Activated CD8-positive, alpha-beta T cell treated with anti-CD3 and anti-CD28 coated beads, Interleukin-2, amount 10 ng/mL, durations not matched to agents 7 days and 5 days (primary cell): ENCODE measurements at regions of chr15 and their contacts with region 1.

Region 1: DNA sequence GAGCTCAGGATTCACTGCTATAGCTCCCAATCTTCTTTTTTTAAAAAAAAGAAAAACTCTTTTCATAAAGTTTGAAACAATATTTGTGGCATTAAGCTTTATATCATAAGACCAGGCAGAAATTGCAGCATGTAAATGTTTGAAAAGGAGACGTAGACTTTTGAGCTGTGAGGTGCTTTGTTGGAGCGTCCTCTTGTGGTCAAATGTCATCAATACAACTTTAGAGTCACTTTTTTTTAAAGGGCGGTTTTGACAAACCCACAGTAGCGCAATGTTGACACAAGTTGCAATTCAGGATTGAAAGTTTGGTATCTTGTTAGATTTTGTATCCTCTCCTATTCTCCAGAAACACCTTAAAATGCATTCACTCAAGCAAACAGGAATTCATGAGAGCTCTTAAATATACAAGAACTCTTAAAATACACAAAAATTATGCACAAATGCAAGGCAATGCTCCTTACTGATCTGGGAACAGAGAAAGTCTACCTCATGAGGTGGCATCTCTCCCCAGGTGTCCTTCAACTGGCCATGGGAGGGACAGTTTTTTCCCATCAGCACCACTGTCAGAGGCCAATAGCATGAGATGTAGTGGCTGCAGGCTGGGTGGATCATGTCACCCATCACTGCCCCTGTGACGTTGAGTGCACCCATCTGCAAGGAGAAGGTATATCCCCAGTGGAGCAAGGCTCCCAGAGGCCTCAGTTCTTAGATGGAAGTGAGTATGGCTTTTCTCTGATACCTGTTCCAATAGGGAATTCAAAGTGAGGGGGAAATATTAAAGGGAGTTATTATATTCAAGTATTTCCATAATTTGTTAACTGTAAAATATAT is 70.7 kb downstream of the ANXA2 start:
- DNase-seq: peak; percentile 60
- ATAC-seq: no peak
- H3K4me3 Mint-ChIP-seq: no peak overlapping the region
- H3K27ac Mint-ChIP-seq: no peak overlapping the region
- H3K4me1 Mint-ChIP-seq: no peaks in the 10 kb centered on the region
- H3K27me3 Mint-ChIP-seq: peaks cover 40% of the 10 kb centered on the region

Region 2: GRCh38 chr15:59688841-59689625 is 638.0 kb before region 1 on chr15 and contains the start of gene BNIP2:
- CTCF ChIA-PET with region 1: interaction called, 17 read pairs
- POLR2A ChIA-PET with region 1: no interaction called
- DNase-seq: peak; percentile 100
- ATAC-seq: peak; percentile 94
- H3K4me3 Mint-ChIP-seq: peak within 1 kb of the TSS; percentile 88
- H3K27ac Mint-ChIP-seq: peak within 1 kb of the TSS; percentile 96
- H3K4me1 Mint-ChIP-seq: peaks cover 40% of the 10 kb centered on the region
- H3K27me3 Mint-ChIP-seq: no peaks in the 10 kb centered on the region
- total RNA-seq, gene BNIP2: 69.0 to 74.8 TPM

Region 3: GRCh38 chr15:59741274-59741906 is 585.6 kb before region 1 on chr15:
- CTCF ChIA-PET with region 1: interaction called, 15 read pairs
- POLR2A ChIA-PET with region 1: interaction called, 3 read pairs
- DNase-seq: no peak
- ATAC-seq: no peak
- H3K4me3 Mint-ChIP-seq: no peak overlapping the region
- H3K27ac Mint-ChIP-seq: no peak overlapping the region
- H3K4me1 Mint-ChIP-seq: no peaks in the 10 kb centered on the region
- H3K27me3 Mint-ChIP-seq: peaks cover 8% of the 10 kb centered on the region

Region 4: DNA sequence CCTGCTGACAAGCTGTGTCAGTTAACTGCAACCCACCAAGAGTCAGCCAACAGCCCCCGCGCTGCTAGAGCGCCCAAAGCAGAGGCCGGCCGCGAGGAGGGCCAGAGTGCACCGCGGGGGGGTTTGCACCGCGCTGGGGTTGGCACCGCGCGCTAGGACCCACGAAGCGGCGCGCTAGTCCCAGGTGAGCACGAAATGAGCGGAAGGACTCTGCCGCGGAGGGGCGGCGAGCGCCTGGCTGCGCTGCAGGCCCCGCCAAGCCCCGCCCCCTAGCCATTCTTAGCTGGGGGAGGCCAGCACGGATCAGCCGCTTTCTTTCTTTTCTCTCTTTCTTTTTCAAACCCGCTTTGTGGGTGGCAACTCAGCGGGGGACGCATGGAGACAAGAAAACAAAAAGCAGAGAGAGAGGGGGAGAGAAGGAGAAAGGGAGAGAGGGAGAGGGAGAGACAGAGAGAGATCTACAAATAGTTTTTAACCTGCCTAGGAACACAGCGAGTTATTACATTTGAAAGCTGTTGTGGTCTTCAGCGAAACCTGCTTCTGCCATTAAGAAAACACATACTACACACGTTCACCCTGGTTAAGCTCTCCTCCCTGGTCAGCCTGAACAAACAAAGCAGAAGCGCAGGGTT is 329.9 kb before region 1 on chr15:
- CTCF ChIA-PET with region 1: interaction called, 14 read pairs
- POLR2A ChIA-PET with region 1: no interaction called
- DNase-seq: peak; percentile 85
- ATAC-seq: peak; percentile 93
- H3K4me3 Mint-ChIP-seq: peak overlapping the region; percentile 81
- H3K27ac Mint-ChIP-seq: peak overlapping the region; percentile 82
- H3K4me1 Mint-ChIP-seq: peaks cover 79% of the 10 kb centered on the region
- H3K27me3 Mint-ChIP-seq: peaks cover 93% of the 10 kb centered on the region

Region 5: GRCh38 chr15:60243769-60244168 is 83.3 kb before region 1 on chr15:
- CTCF ChIA-PET with region 1: no interaction called
- POLR2A ChIA-PET with region 1: no interaction called
- DNase-seq: no peak
- ATAC-seq: no peak
- H3K4me3 Mint-ChIP-seq: no peak overlapping the region
- H3K27ac Mint-ChIP-seq: no peak overlapping the region
- H3K4me1 Mint-ChIP-seq: no peaks in the 10 kb centered on the region
- H3K27me3 Mint-ChIP-seq: peaks cover 51% of the 10 kb centered on the region

Region 6: DNA sequence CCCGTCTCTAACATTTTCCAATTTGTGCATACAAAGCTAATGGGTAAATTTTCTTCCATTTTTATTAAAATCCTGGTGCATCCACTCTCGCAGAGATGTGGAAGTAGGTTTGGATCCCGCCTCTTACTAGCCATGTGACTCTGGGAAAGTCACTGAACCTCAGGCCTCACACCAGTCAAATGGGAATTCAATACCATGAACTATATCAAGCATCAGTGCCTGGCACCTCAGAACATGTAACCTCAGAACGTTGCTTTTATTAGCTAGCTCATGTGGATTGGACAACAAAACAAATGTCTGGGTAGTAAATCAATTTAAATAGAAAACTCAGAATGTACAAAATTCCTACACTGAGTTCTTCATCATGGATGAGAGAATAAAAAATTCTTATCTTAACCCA is 10.0 kb after region 1 on chr15:
- CTCF ChIA-PET with region 1: interaction called, 12 read pairs
- POLR2A ChIA-PET with region 1: no interaction called
- DNase-seq: no peak
- ATAC-seq: no peak
- H3K4me3 Mint-ChIP-seq: no peak overlapping the region
- H3K27ac Mint-ChIP-seq: no peak overlapping the region
- H3K4me1 Mint-ChIP-seq: no peaks in the 10 kb centered on the region
- H3K27me3 Mint-ChIP-seq: peaks cover 36% of the 10 kb centered on the region